ENCODE measurements at regions of chr20 and their contacts with region 1.

Region 1: DNA sequence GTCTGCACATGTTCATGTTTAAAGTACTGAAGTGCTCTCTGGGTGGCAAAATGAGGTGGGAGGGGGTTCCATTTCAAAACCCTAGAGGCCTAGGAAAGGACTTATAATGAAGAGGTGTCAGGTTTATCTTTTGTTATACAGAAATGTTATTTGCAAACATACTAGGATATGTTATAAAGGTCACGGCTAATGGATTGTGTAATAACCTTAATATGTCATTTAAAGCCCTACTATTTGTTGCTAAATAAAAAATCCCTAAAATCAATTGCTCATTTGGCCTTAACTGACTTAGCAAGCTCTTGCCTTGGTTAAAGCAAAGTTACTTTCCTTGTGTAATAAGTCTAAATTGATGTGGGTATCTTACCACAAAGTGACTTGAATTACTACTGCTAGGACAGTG is 8.8 kb downstream of the NKX2-4 start:
- DNase-seq: no peak
- ATAC-seq: no peak
- H3K4me3 ChIP-seq: no peak overlapping the region
- H3K27ac ChIP-seq: no peak overlapping the region
- H3K4me1 ChIP-seq: no peaks in the 10 kb centered on the region
- H3K27me3 ChIP-seq: no peaks in the 10 kb centered on the region
- CTCF ChIP-seq: no peak
- EP300 ChIP-seq: no peak
- POLR2A ChIP-seq: no peak
- RAD21 ChIP-seq: no peak

Region 2: GRCh38 chr20:21371193-21371592 is 17.4 kb before region 1 on chr20:
- CTCF ChIA-PET with region 1: no interaction called
- POLR2A ChIA-PET with region 1: no interaction called
- in situ Hi-C with region 1: no loop called
- intact Hi-C with region 1: loop called (anchors 1 kb)
- DNase-seq: no peak
- ATAC-seq: peak; percentile 54; the same call in 2 of the 3 replicates
- H3K4me3 ChIP-seq: no peak overlapping the region
- H3K27ac ChIP-seq: no peak overlapping the region
- H3K4me1 ChIP-seq: peaks cover 3% of the 10 kb centered on the region
- H3K27me3 ChIP-seq: no peaks in the 10 kb centered on the region
- CTCF ChIP-seq: no peak
- EP300 ChIP-seq: no peak
- POLR2A ChIP-seq: no peak
- RAD21 ChIP-seq: no peak

Region 3: GRCh38 chr20:21424846-21425245 is 36.3 kb after region 1 on chr20:
- CTCF ChIA-PET with region 1: no interaction called
- POLR2A ChIA-PET with region 1: no interaction called
- in situ Hi-C with region 1: no loop called
- intact Hi-C with region 1: no loop called
- DNase-seq: no peak
- ATAC-seq: no peak
- H3K4me3 ChIP-seq: no peak overlapping the region
- H3K27ac ChIP-seq: no peak overlapping the region
- H3K4me1 ChIP-seq: no peaks in the 10 kb centered on the region
- H3K27me3 ChIP-seq: peaks cover 0 to 2% of the 10 kb centered on the region in 2 experiments; a peak in 1 of 5 replicates
- CTCF ChIP-seq: no peak
- EP300 ChIP-seq: no peak
- POLR2A ChIP-seq: no peak
- RAD21 ChIP-seq: no peak

Measured in HepG2 (cell line).